Caki2 (cell line): ENCODE measurements at regions of chr12 and their contacts with region 1.

Region 1: GRCh38 chr12:95217377-95218149 is at the starts of genes FGD6 and VEZT:
- DNase-seq: peak; percentile 99
- total RNA-seq, gene FGD6: 5.9 and 6.6 TPM in 2 replicates
- total RNA-seq, gene VEZT: 26.0 and 42.9 TPM in 2 replicates

Region 2: GRCh38 chr12:94445662-94446061 is 771.9 kb before region 1 on chr12:
- in situ Hi-C with region 1: no loop called
- DNase-seq: no peak

Region 3: DNA sequence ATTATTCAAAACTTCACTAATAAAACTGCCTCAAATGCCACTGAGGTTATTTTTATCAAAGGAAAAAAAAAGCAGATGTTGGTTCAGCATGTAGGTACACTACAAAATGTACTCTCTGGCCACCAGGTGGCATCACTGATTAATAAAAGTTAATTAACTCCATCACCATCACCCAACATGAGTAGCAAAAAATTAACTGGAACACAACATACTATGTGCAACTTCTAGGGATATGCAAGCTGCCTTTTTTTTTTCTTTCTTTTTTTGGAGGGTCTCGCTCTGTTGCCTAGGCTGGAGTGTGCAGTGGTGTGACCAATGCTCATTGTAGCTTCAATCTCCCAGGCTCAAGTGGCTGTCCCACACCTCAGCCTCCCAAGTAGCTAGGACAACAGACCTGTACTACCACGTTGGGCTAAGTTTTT is 100.4 kb before region 1 on chr12:
- in situ Hi-C with region 1: loop called (anchors 25 kb)
- DNase-seq: peak; percentile 85